PC-9 (cell line): ENCODE measurements at regions of chr7 and their contacts with region 1.

Region 1: GRCh38 chr7:121329191-121330052 is 622 bp downstream of the WNT16 start:
- DNase-seq: peak in 1 of 2 experiments; percentile 61
- H3K4me3 ChIP-seq: peak overlapping the region; percentile 71
- H3K27ac ChIP-seq: no peak overlapping the region
- H3K4me1 ChIP-seq: no peaks in the 10 kb centered on the region
- H3K27me3 ChIP-seq: no peaks in the 10 kb centered on the region
- CTCF ChIP-seq: no peak; the same call in 1 of the 2 replicates

Region 2: GRCh38 chr7:120927454-120928103 is 401.8 kb before region 1 on chr7:
- CTCF ChIA-PET with region 1: no interaction called
- POLR2A ChIA-PET with region 1: no interaction called
- intact Hi-C with region 1: no loop called
- DNase-seq: no peak
- H3K4me3 ChIP-seq: no peak overlapping the region
- H3K27ac ChIP-seq: no peak overlapping the region
- H3K4me1 ChIP-seq: peaks cover 18% of the 10 kb centered on the region
- H3K27me3 ChIP-seq: no peaks in the 10 kb centered on the region
- CTCF ChIP-seq: no peak

Region 3: DNA sequence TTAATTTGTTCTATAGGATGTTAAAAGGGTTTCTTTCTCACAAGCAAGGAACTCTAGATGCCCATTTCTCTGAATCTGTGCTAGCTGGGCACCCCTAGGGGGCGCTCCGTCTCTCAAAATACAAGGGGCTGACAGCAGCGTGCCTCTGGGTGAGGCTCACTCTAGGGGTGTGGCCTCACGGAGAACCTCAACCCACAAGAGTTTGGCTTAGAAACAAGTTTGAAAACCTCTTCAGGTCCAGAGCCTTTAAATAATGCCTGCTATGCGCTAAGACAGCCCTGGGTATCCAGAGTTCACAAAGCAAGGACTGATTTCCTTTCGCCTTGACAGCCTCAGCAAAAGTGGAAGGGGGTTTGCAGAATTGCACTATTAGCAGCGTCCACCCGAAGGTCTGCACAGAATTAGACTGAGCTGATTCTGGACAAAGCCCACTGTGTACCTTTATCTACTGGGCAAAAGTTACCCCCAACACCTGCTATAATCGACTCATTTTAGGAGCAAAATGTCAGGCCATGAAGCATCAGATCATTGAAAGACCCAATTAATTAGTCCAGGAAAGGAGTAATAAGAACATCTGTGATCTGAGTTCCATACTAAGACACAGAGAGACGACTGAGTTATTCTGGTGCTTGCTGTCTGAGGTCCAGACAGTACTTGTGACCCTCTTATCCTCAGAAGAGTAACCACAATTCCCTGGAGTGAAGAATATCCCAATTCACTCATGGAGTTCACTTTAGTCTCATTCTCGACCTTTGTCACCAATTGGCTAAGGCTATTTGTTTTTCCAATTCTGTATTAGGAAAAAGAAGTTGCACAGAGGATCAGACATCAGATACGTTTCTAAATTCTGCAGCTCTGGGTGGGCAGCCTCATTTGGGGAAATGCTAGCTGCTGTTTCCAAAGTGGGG is 341.5 kb before region 1 on chr7:
- CTCF ChIA-PET with region 1: no interaction called
- POLR2A ChIA-PET with region 1: no interaction called
- intact Hi-C with region 1: loop called (anchors 10 kb)
- DNase-seq: peak; percentile 74 to 85
- H3K4me3 ChIP-seq: peak overlapping the region; percentile 74
- H3K27ac ChIP-seq: no peak overlapping the region
- H3K4me1 ChIP-seq: peaks cover 10% of the 10 kb centered on the region
- H3K27me3 ChIP-seq: no peaks in the 10 kb centered on the region
- CTCF ChIP-seq: peak; percentile 95

Region 4: DNA sequence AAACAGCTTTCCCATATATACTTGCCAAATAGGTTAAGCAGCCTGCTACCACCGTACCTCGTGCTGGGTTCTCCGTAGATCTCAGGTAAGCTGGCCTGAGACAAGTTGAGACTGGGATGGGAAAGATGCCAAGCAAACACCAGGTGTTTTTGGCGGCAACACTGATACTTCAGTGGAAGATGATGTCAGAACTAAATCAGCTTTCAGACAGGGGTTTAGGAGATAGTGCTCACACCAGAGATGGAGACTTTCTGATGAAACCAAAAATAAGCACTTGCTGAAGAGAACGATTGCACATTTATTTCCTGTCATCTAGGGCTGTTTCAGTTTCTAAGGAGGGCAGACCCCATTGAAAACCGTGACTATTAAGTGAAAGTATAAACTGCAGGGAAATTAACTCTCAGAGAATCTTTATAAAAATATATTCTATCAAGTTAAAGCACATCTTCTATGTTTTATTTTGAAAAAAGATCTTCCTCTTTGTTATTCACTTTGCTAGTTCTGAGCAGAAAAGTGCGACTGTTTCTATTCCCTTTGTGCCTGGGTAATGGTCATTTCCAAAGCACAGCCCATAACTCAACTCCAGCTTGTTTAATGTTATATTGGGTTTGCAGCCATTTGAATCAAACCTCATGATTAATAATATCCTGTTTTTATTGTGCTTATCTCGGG is 191.0 kb before region 1 on chr7:
- CTCF ChIA-PET with region 1: no interaction called
- POLR2A ChIA-PET with region 1: interaction called, 25 read pairs
- intact Hi-C with region 1: no loop called
- DNase-seq: no peak
- H3K4me3 ChIP-seq: no peak overlapping the region
- H3K27ac ChIP-seq: no peak overlapping the region
- H3K4me1 ChIP-seq: no peaks in the 10 kb centered on the region
- H3K27me3 ChIP-seq: no peaks in the 10 kb centered on the region
- CTCF ChIP-seq: no peak

Region 5: DNA sequence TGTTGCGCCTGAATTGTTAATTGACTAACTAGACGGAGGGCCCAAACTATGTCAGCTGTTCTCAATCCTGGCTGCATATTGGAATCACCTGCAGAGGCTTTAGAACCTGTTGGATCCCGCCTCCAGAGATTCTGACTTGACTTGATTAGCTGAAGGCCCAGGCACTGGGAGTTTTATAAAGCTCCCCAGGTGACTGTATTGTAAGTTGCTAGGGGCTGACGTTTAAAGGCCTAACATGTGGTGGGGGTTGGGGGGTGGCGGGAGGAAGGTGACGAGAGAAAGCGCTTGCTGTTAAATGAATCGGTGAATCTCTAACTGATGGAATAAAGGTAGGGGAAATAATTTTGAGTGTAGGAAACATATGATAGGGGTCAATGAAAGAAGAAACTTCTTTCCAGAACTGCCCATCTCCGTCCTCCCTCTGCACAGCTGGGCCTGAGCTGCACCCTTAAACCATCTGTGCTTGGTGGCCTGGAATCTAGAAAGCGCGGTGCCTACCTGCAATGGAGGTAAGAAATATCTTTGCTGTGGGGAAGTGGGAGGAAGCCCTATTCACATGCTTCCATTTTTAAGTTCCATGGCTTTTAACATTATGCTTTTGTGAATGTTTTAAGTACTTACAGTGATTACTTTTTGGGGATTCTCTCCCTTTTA is 291.7 kb after region 1 on chr7:
- CTCF ChIA-PET with region 1: interaction called, 12 read pairs
- POLR2A ChIA-PET with region 1: no interaction called
- intact Hi-C with region 1: no loop called
- DNase-seq: no peak
- H3K4me3 ChIP-seq: no peak overlapping the region
- H3K27ac ChIP-seq: no peak overlapping the region
- H3K4me1 ChIP-seq: no peaks in the 10 kb centered on the region
- H3K27me3 ChIP-seq: no peaks in the 10 kb centered on the region
- CTCF ChIP-seq: no peak